ENCODE measurements at regions of chr3 and their contacts with region 1.

Region 1: DNA sequence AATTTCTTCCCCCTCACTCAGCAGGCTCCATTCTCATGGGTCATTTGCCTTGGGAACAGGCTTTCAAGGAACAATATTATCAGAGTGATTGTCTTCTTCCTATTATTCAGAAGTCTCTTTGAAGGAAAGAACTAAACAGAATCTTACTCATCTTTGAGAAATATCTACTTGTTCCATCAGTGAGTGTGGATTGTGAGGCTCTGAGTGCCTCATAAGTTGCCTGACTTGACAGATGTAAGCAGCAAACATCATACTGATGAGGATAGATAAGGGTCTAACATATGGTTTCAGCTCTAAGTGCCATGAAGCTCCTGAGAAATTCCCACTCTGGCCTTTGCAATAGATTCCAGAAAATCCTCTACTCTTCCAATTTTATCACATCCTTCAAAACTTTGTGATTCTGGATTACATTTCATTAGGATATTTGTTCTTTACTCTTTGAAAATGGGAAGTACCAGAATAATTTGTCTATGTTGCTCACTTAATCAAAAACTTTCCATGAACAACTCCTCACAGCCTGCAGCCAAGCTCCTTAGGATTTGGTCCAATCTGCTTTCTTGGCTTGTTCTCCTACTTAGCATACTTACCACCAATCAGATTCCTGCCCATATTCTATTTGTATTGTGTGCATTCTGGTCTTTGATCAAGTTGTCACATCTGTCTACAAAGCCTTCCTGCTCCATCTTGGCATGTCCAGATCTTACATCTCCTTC is 120.1 kb downstream of the RPL22L1 start:
- DNase-seq: no peak
- H3K27ac ChIP-seq: no peak overlapping the region
- CTCF ChIP-seq: no peak

Region 2: GRCh38 chr3:170469151-170470062 is 280.5 kb before region 1 on chr3:
- CTCF ChIA-PET with region 1: no interaction called
- POLR2A ChIA-PET with region 1: interaction called, 10 read pairs
- DNase-seq: no peak
- H3K27ac ChIP-seq: peak overlapping the region; percentile 68
- CTCF ChIP-seq: no peak

Region 3: DNA sequence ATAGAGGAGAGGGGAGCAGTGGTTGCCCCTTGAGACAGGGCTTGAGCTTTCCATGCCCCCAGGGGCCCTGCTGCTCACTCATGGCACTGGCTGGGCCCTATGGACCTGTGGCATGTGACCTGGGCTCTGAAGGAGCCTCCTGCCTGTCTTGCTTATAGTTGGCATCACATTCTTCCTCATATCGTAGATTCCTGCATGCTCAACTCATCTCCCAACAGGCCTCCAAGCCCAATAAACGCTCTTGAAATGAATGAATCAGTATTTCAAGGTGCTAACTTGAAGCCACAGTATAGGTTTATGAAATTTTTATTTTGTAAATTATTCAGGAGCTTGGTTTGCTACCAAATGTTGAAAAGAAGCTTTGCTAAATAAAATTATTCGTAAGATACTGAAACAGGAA is 70.7 kb before region 1 on chr3:
- CTCF ChIA-PET with region 1: no interaction called
- POLR2A ChIA-PET with region 1: no interaction called
- DNase-seq: no peak
- H3K27ac ChIP-seq: no peak overlapping the region
- CTCF ChIP-seq: no peak

Region 4: GRCh38 chr3:170703121-170703588 is 46.8 kb before region 1 on chr3:
- CTCF ChIA-PET with region 1: no interaction called
- POLR2A ChIA-PET with region 1: no interaction called
- DNase-seq: peak; percentile 51
- H3K27ac ChIP-seq: peak overlapping the region; percentile 34; the same call in 1 of the 2 replicates
- CTCF ChIP-seq: no peak

Region 5: GRCh38 chr3:170869645-170870593 is 120.0 kb after region 1 on chr3 and contains the start of gene RPL22L1:
- CTCF ChIA-PET with region 1: no interaction called
- POLR2A ChIA-PET with region 1: no interaction called
- DNase-seq: peak; percentile 88
- H3K27ac ChIP-seq: peak within 1 kb of the TSS; percentile 81
- CTCF ChIP-seq: no peak

Measured in RWPE1 (cell line).